ENCODE measurements at regions of chr1 and their contacts with region 1.

Region 1: DNA sequence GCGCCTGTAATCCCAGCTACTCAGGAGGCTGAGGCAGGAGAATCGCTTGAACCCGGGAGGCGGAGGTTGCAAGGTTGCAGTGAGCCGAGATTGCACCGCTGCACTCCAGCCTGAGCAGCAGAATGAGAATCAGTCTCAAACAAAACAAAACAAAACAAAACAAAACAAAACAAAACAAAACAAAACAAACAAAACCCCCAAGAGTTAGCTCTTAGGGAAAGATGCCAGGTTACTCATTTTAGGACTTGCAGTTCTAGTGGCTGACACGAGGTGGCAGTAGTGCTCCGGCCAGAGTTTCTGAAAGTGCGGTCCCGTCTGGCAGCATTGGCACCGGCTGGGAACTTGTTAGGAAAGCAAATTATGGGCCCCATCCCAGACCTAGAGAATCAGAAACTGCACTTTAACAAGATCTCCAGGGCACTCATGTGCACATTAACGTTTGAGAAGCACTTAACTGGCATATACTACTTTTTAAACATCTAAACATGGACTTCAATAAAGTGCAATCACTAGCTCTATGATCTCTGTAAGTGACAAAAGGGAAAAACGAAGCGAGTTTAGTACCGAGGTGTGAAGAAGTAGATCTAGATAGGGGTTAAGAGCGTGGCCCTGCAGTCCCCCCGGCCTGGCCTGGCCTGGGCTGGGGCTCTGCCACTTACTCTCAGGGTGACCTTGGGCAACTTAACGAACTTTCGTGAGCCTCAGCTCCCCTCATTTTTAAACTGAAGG is 41.9 kb upstream of the TNFRSF1B start:
- DNase-seq: no peak
- H3K4me3 ChIP-seq: no peak overlapping the region
- H3K27ac ChIP-seq: peak overlapping the region in 2 of 4 donors; percentile 54 to 64
- H3K4me1 ChIP-seq: peaks cover 9 to 20% (median 9%) of the 10 kb centered on the region in 3 donors
- H3K27me3 ChIP-seq: peaks cover 0 to 58% (median 0%) of the 10 kb centered on the region in 4 donors
- CTCF ChIP-seq: peak; percentile 94 to 99 (median 98)
- POLR2A ChIP-seq: no peak

Region 2: GRCh38 chr1:11805447-11806306 is 319.2 kb before region 1 on chr1 and contains the starts of genes CLCN6 and MTHFR:
- intact Hi-C with region 1: no loop called
- DNase-seq: peak; percentile 96
- H3K4me3 ChIP-seq: peak within 1 kb of the TSS; percentile 65 to 99 (median 90)
- H3K27ac ChIP-seq: peak within 1 kb of the TSS; percentile 95 to 100 (median 99)
- H3K4me1 ChIP-seq: peaks cover 32 to 79% (median 42%) of the 10 kb centered on the region in 3 donors
- H3K27me3 ChIP-seq: no peaks in the 10 kb centered on the region
- CTCF ChIP-seq: no peak
- POLR2A ChIP-seq: peak in 2 of 4 donors; percentile 93 to 98
- total RNA-seq, gene CLCN6: 4.2 to 13.5 (median 9.9) TPM
- total RNA-seq, gene MTHFR: 15.6 to 30.1 (median 25.4) TPM

Region 3: GRCh38 chr1:12208764-12209494 is 84.1 kb after region 1 on chr1:
- intact Hi-C with region 1: loop called (anchors 2 kb)
- DNase-seq: no peak
- H3K4me3 ChIP-seq: no peak overlapping the region
- H3K27ac ChIP-seq: peak overlapping the region in 1 of 4 donors; percentile 10
- H3K4me1 ChIP-seq: peaks cover 0 to 21% (median 5%) of the 10 kb centered on the region in 3 donors
- H3K27me3 ChIP-seq: no peaks in the 10 kb centered on the region
- CTCF ChIP-seq: peak; percentile 85 to 98 (median 96)
- POLR2A ChIP-seq: no peak